Activated T-helper 2 cell treated with anti-CD3 and anti-CD28 coated beads, Interferon-gamma antibody, Interleukin-2, Interleukin-4, amounts not matched to agents 10 μg/mL and 5 μg/mL and 100 μg/mL, durations not matched to agents 14 hours and 24 hours and 36 hours (primary cell): ENCODE measurements at regions of chr9 and their contacts with region 1.

Region 1: DNA sequence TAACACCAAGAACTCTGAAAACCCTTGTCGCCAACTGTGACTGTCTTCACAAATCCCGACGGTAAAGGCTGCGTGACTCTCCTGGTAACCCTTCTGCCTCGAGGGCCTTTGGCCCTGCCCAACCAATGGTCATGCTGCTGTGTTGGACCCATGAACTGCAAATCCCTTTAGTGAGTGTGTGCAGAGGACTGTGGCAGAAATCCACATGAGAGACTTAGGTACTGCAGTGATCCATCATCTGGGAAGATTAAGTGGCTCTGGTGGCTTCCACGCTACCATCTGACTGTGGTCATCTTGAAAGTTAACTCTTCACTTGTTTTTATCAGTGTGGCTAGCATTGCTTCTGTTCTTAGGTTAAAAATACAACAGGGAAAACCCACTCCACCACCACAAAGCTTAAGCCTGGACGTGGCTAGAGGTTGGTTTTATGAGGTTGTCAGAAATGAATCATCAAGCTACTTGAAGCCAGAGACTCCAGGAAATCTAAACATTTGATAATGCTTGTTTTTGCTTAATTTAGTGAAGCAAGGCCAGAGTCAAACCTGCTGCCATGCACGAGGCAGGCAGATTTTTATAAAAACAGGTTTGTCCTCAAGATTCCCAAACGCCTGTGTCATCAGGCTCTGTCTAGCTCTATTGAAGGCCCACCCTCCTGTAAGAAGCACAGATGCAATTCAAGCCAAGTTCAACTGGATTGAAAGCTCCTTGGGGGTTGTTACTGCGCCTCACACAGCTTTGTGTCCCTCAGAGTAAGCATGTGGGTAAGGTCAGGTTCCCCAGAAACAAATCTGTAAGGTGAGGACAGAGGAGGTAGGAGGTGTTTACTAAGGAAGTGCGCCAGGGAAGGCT is 52.7 kb upstream of the ERCC6L2 start:
- DNase-seq: peak; percentile 40
- H3K4me3 Mint-ChIP-seq: no peak overlapping the region
- H3K27ac Mint-ChIP-seq: peak overlapping the region; percentile 18
- H3K4me1 Mint-ChIP-seq: peaks cover 40% of the 10 kb centered on the region
- H3K27me3 Mint-ChIP-seq: peaks cover 39% of the 10 kb centered on the region

Region 2: DNA sequence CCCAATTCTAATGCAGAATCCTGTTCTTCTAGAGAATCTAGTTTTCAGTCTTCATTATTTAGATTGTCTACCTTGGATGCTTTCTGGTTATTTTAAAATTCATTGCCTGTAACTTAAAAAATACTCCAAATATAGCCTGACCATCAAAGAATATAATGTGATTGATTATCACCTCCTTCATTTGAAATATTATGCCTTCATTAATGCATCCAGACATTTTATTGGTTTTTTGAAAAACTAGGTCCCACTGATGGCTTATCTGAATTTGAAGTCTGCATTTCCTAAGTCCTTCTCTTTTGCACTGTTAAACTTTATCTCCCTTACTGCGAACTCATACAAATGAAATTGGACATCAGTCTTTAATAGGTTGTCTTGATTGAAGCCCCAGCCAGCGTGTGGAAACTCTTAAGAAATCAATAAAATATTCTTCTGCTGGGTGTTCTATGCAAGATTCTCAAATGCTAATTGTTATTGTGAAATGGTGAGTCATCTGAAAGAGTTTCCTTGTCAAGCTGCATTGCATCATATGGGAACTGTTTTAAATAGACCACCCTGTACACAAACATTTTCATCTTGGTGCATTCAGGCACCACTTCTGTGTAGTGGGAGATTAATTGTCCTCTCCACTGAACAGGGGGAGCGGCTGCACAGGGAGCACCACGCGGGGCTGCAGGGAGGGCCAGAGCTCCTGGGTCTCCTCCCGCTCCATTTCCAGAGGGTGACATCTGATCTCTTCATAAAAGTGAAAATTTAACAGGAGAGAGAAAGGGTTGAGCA is 413.0 kb before region 1 on chr9:
- intact Hi-C with region 1: no loop called
- DNase-seq: no peak
- H3K4me3 Mint-ChIP-seq: no peak overlapping the region
- H3K27ac Mint-ChIP-seq: no peak overlapping the region
- H3K4me1 Mint-ChIP-seq: no peaks in the 10 kb centered on the region
- H3K27me3 Mint-ChIP-seq: peaks cover 9% of the 10 kb centered on the region

Region 3: GRCh38 chr9:95588724-95589652 is 233.8 kb before region 1 on chr9:
- intact Hi-C with region 1: no loop called
- DNase-seq: no peak
- H3K4me3 Mint-ChIP-seq: no peak overlapping the region
- H3K27ac Mint-ChIP-seq: no peak overlapping the region
- H3K4me1 Mint-ChIP-seq: no peaks in the 10 kb centered on the region
- H3K27me3 Mint-ChIP-seq: peaks cover 23% of the 10 kb centered on the region

Region 4: GRCh38 chr9:95852059-95853032 is 29.5 kb after region 1 on chr9:
- intact Hi-C with region 1: loop called (anchors 1 kb)
- DNase-seq: no peak
- H3K4me3 Mint-ChIP-seq: peak overlapping the region; percentile 23
- H3K27ac Mint-ChIP-seq: no peak overlapping the region
- H3K4me1 Mint-ChIP-seq: peaks cover 45% of the 10 kb centered on the region
- H3K27me3 Mint-ChIP-seq: no peaks in the 10 kb centered on the region

Region 5: GRCh38 chr9:95875305-95876137 is 52.7 kb after region 1 on chr9 and contains the start of gene ERCC6L2:
- intact Hi-C with region 1: loop called (anchors 2 kb)
- DNase-seq: peak; percentile 91
- H3K4me3 Mint-ChIP-seq: no peak within 1 kb of the TSS
- H3K27ac Mint-ChIP-seq: no peak within 1 kb of the TSS
- H3K4me1 Mint-ChIP-seq: peaks cover 30% of the 10 kb centered on the region
- H3K27me3 Mint-ChIP-seq: no peaks in the 10 kb centered on the region
- total RNA-seq, gene ERCC6L2: 28.2 and 33.0 TPM in 2 replicates

Region 6: DNA sequence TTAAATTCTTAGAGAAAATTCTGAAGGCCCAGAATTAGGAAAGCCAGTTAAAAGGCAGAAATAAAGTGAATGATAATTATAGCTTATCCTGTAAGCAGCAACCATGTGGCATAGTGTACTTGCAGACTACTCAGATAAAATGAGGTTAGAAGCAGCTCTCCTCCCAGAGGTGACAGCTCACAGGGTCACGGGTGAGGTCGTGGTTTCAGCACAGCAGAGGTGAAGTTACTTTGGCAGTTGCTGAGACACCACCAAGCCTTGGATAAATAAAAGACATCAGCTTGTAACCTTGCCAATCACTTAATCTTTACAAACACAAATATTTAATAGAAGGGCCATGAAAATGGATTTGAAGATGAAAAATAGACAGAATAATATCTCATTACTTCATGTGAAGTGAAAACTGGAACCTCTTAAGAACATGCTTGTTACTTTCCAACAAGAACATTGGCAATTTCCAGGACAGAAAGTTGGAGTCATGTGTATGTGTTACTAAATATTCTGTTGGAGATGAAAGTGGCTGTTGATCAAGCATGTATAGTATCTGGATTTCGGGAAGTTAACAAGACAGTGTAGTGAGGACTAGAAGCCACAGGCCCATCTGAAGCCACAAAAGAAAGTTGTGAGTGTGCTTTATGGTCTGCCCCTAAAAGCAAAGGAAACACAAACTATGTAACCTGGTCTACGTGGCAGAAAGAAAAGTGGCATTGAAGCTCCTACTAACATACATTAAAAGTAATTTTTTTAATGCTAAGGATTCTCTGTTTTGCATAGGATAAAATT is 187.1 kb after region 1 on chr9:
- intact Hi-C with region 1: loop called (anchors 5 kb)
- DNase-seq: peak; percentile 74
- H3K4me3 Mint-ChIP-seq: no peak overlapping the region
- H3K27ac Mint-ChIP-seq: peak overlapping the region; percentile 92
- H3K4me1 Mint-ChIP-seq: peaks cover 54% of the 10 kb centered on the region
- H3K27me3 Mint-ChIP-seq: no peaks in the 10 kb centered on the region

Region 7: DNA sequence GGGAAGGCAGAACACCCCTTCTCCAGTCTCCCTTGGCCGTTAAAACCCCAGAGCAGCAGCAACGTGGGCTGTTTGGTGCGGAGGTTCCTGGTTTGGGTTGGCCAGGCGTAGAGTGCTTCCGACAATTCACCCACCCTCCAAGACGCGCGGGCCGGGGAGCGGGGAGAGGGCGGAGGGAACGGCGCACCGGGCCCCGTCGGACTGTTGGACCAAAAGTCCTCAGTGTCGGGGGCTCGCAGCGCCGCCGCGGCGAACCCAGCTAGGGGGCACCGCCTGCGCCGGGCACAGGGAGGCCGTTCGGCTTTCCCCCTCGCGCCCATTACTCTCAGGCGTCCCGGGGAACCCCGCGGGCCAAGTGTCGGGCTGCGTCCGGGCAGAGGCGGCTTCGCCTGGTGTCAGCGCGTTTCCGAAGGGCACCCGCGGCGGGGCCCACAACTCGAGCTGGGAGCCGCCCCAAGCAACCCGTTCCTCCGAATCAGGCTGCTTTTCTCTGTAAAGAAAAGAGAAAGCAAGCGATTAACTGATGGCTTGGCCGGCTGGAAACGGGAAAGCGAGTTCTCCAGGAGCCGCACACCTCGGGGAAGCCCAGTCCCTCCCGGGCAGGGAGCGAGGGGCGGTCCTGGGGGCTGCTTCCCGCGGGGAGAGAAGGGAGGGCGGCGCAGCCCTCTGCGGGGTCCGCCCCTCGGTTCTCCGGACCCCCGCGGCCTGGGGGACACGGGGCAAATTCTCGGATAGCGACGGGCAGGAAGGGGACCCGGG is 198.2 kb after region 1 on chr9:
- intact Hi-C with region 1: no loop called
- DNase-seq: peak; percentile 54
- H3K4me3 Mint-ChIP-seq: peak overlapping the region; percentile 79
- H3K27ac Mint-ChIP-seq: peak overlapping the region; percentile 91
- H3K4me1 Mint-ChIP-seq: peaks cover 75% of the 10 kb centered on the region
- H3K27me3 Mint-ChIP-seq: no peaks in the 10 kb centered on the region

Region 8: DNA sequence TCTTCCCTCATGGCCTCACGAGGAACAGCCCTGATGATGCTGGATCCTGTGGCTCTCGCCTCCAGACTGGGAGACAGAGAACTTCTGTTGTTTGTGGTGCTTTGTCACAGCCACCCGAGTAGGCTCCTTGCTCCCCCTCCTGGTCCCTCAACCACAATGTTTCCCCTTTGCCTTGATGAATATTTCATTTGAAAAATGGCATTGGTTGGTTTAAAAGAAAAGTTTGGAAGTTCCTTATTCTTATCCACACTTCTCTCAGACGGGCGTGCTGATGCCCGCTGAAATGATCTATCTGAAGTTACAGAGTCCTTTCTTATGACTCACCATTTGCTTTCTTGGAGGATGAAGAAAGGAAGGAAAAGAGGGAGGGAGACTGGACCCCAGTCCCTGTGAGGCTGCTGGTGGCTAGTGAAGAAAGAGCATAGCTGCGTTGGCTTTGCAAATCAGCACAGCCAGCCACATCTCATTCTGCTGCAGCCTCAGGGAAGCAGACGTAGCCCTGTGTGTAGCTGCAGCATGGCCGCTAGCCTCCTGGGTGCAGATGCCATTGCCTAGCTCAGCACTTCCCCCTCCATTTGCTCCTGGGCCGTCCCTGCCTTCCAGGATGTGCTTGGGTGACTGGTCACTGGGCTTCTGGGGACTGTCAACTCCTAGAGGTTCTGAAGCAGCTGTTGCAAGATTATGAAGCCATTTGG is 238.6 kb after region 1 on chr9:
- intact Hi-C with region 1: loop called (anchors 2 kb)
- DNase-seq: peak; percentile 23
- H3K4me3 Mint-ChIP-seq: no peak overlapping the region
- H3K27ac Mint-ChIP-seq: no peak overlapping the region
- H3K4me1 Mint-ChIP-seq: peaks cover 23% of the 10 kb centered on the region
- H3K27me3 Mint-ChIP-seq: no peaks in the 10 kb centered on the region

Region 9: GRCh38 chr9:96150324-96151227 is 327.8 kb after region 1 on chr9:
- intact Hi-C with region 1: loop called (anchors 1 kb)
- DNase-seq: peak; percentile 52
- H3K4me3 Mint-ChIP-seq: peak overlapping the region; percentile 44
- H3K27ac Mint-ChIP-seq: peak overlapping the region; percentile 74
- H3K4me1 Mint-ChIP-seq: peaks cover 41% of the 10 kb centered on the region
- H3K27me3 Mint-ChIP-seq: peaks cover 9% of the 10 kb centered on the region

Region 10: DNA sequence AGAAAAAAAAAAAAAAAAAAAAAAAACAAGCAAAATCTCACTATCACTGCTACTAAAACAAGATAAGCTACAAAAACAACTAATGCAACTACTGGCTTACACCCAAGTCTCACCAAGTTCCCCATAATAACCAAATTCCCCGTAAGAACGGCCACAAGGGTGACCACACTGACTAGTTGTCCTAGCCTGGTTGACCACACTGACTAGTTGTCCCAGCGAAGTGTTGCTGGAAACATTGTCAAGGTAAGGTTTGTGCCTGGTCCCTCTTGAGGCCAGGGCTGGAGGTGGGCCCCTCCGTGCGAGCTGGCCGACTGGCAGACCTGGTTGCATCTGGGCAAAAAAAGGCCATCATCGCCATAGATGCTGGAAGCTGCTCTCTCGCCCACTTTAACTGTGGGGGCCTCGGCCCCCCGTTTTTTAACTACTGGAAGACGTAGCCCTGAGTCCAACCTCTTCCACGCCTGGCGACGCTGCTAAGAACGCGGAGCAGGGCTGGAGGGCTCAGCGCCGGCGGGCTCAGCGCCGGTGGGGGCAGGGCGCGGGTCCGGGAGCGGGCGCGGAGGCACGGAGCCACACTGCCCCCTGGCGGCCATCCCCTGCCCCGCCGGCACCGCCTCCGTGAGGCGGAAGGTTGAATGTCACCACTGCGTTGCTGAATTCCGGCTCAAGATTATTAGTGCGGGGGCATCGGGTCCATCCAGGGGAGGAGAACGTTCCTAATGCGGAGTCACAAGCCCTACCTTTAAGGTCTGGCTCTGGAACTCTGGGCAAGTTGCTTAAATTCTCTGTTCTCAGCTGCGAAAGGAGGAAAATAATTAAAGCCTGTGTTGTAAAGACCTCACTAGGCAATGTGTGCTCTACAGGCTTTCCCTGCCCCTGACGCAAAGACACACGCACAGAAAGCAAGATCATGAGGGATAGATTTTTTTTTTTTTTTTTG is 395.2 kb after region 1 on chr9:
- intact Hi-C with region 1: loop called (anchors 2 kb)
- DNase-seq: peak; percentile 64
- H3K4me3 Mint-ChIP-seq: peak overlapping the region; percentile 67
- H3K27ac Mint-ChIP-seq: no peak overlapping the region
- H3K4me1 Mint-ChIP-seq: peaks cover 13% of the 10 kb centered on the region
- H3K27me3 Mint-ChIP-seq: peaks cover 60% of the 10 kb centered on the region